ENCODE measurements at regions of chr1 and their contacts with region 1.

Region 1: DNA sequence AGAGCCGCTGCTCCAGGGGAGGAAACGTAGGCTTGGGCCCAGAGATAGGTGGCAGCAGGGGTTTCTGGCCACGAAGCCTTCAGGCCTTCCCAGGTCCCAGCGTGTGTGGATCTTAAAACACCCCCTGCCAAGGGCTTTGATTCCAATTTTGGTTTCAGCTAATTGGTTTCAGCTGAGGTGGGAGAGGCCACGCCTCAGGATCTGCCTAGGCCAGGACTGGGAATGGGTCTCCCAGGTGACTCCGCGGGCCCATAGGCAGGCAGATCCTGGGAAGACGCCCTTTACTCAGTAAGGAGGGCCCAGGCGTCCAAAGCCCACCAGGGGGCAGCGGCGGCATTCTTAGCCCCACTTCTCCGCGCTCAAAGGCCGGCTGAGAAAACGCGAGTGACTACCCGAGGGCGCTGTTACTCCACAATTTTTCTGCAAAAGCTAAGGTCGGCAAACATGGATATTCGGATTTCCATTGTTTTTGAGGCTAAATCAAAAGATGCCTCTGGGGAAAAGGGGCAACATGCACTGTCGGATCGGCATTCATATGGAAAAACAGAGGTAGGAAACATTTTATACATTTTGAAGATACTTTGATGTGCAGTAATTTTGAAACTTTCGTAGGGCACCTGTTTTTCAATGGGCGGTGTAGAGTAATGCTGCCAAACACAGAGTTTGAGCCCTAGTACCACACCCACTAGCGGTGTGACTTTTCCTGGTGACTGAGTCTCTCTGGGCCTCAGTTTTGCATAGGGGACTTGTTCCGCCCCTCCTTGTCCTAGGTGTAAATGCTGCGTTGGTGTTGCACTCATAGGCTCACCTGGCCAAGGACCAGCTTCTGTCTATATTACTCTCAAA is 31.8 kb upstream of the BCL10 start:
- DNase-seq: peak; percentile 90 to 97
- ATAC-seq: peak; percentile 96
- H3K4me3 ChIP-seq: no peak overlapping the region
- H3K27ac ChIP-seq: no peak overlapping the region
- H3K4me1 ChIP-seq: peaks cover 0 to 1% of the 10 kb centered on the region in 2 donors
- H3K27me3 ChIP-seq: no peaks in the 10 kb centered on the region

Region 2: GRCh38 chr1:85344256-85344694 is 36.1 kb after region 1 on chr1:
- intact Hi-C with region 1: loop called in 1 of 2 experiments (anchors 5 kb)
- DNase-seq: no peak
- ATAC-seq: no peak
- H3K4me3 ChIP-seq: no peak overlapping the region
- H3K27ac ChIP-seq: peak overlapping the region in 1 of 2 donors; percentile 81
- H3K4me1 ChIP-seq: peaks cover 2 to 12% of the 10 kb centered on the region in 2 donors
- H3K27me3 ChIP-seq: no peaks in the 10 kb centered on the region

Region 3: GRCh38 chr1:85464497-85465098 is 156.4 kb after region 1 on chr1:
- intact Hi-C with region 1: loop called in 1 of 2 experiments (anchors 5 kb)
- DNase-seq: peak; percentile 80 to 91
- ATAC-seq: peak; percentile 82
- H3K4me3 ChIP-seq: peak overlapping the region; percentile 35 to 86
- H3K27ac ChIP-seq: peak overlapping the region; percentile 33 to 52
- H3K4me1 ChIP-seq: peaks cover 4 to 5% of the 10 kb centered on the region in 2 donors
- H3K27me3 ChIP-seq: no peaks in the 10 kb centered on the region

Region 4: GRCh38 chr1:85502625-85503083 is 194.4 kb after region 1 on chr1:
- intact Hi-C with region 1: loop called in 1 of 2 experiments (anchors 5 kb)
- DNase-seq: no peak
- ATAC-seq: no peak
- H3K4me3 ChIP-seq: no peak overlapping the region
- H3K27ac ChIP-seq: no peak overlapping the region
- H3K4me1 ChIP-seq: peaks cover 0 to 3% of the 10 kb centered on the region in 2 donors
- H3K27me3 ChIP-seq: no peaks in the 10 kb centered on the region

Region 5: DNA sequence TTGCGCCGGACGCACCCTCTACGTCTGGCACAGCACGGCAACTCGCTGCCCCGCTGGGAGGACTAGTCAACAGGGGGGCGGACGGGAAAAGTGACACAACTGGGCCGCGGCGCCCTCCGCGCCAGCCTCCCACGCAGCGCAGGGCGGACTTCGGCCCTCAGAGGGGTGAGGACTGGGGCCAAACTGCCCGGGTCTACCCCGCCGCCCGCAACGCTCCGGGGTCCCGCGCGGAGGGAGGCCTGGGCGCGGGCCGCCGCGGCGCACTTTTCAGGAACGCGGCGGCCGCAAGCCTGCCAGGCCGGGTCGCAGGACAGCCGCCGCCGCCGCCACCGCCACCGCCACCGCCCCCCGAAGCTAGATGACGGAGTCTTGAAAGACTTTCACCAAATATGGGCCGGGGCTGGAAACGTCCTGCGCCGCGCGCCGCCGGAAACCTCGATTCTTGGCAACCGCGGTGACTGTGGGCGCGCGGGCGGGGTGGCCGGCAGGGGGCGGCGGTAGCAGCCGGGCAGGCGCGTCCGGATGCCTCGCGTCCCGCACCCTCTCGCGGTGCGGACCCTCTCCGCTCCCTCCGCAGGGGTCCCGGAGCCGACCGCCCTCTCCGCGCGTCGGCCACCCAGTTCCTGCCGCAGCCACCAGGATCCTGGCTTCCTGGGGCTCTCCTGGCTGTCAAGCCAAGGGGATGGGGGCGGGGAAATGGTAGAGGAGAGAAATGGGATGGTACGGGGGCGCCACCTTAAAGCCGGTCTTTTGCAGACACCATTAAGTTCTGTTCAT is 268.6 kb after region 1 on chr1:
- intact Hi-C with region 1: loop called (anchors 2 to 5 kb)
- DNase-seq: peak; percentile 93 to 97
- ATAC-seq: peak; percentile 83
- H3K4me3 ChIP-seq: peak overlapping the region; percentile 64 to 78
- H3K27ac ChIP-seq: peak overlapping the region; percentile 70 to 99
- H3K4me1 ChIP-seq: no peaks in the 10 kb centered on the region
- H3K27me3 ChIP-seq: no peaks in the 10 kb centered on the region

Region 6: GRCh38 chr1:85692730-85693314 is 384.6 kb after region 1 on chr1:
- intact Hi-C with region 1: loop called (anchors 1 to 2 kb)
- DNase-seq: no peak
- ATAC-seq: no peak
- H3K4me3 ChIP-seq: no peak overlapping the region
- H3K27ac ChIP-seq: no peak overlapping the region
- H3K4me1 ChIP-seq: no peaks in the 10 kb centered on the region
- H3K27me3 ChIP-seq: no peaks in the 10 kb centered on the region

Region 7: GRCh38 chr1:85884372-85885035 is 576.3 kb after region 1 on chr1:
- intact Hi-C with region 1: loop called in 1 of 2 experiments (anchors 10 kb)
- DNase-seq: no peak
- ATAC-seq: no peak
- H3K4me3 ChIP-seq: no peak overlapping the region
- H3K27ac ChIP-seq: no peak overlapping the region
- H3K4me1 ChIP-seq: no peaks in the 10 kb centered on the region
- H3K27me3 ChIP-seq: no peaks in the 10 kb centered on the region